PC-9 (cell line): ENCODE measurements at regions of chr12 and their contacts with region 1.

Region 1: DNA sequence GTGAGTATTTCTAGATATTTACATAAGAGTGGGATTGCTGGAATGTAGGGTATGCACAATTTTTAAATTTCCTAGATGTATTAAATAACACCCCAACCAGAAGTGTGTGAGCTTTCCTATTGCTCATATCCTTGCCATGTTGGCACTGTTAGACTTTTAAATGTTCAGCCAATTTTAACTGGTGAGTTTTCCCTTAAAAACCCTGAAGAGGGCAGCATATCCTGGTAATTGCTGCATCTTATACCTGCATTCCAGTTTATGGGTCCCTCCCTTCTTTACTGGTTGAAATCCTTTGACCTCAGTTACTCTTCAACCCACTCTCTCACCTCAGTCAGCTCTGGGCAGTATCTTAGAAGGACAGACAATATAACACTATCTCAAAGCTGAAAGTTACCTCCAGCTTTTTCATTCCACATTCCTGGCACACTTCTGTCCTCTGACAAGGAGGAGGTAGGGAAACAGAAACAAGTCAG is 270.6 kb downstream of the PAWR start:
- DNase-seq: peak; percentile 60 to 87
- H3K4me3 ChIP-seq: no peak overlapping the region
- H3K27ac ChIP-seq: peak overlapping the region; percentile 63
- H3K4me1 ChIP-seq: peaks cover 63% of the 10 kb centered on the region
- H3K27me3 ChIP-seq: no peaks in the 10 kb centered on the region
- CTCF ChIP-seq: peak; percentile 74

Region 2: DNA sequence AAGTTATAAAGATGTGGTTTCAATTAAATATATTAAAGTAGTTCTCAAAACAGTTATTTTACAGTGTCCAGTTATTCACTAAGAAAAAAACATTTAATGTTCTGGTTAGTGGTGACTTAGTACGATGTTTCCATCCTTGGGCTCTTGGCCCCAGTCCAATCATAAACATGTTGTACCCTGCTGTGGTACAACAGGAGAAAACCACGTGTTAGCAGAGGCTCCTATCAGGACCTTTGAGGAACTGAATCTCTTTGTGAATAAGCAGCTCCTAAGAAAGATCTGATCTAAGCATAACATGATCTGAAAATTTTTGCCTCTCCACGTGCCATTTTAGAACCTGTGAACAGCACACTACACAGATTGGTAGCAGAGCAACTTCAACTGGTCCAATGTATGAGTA is 321.7 kb before region 1 on chr12:
- CTCF ChIA-PET with region 1: no interaction called
- POLR2A ChIA-PET with region 1: no interaction called
- intact Hi-C with region 1: no loop called
- DNase-seq: no peak
- H3K4me3 ChIP-seq: no peak overlapping the region
- H3K27ac ChIP-seq: no peak overlapping the region
- H3K4me1 ChIP-seq: no peaks in the 10 kb centered on the region
- H3K27me3 ChIP-seq: no peaks in the 10 kb centered on the region
- CTCF ChIP-seq: no peak

Region 3: GRCh38 chr12:79388011-79388410 is 32.2 kb before region 1 on chr12:
- CTCF ChIA-PET with region 1: no interaction called
- POLR2A ChIA-PET with region 1: no interaction called
- intact Hi-C with region 1: no loop called
- DNase-seq: no peak
- H3K4me3 ChIP-seq: no peak overlapping the region
- H3K27ac ChIP-seq: no peak overlapping the region
- H3K4me1 ChIP-seq: no peaks in the 10 kb centered on the region
- H3K27me3 ChIP-seq: no peaks in the 10 kb centered on the region
- CTCF ChIP-seq: no peak

Region 4: DNA sequence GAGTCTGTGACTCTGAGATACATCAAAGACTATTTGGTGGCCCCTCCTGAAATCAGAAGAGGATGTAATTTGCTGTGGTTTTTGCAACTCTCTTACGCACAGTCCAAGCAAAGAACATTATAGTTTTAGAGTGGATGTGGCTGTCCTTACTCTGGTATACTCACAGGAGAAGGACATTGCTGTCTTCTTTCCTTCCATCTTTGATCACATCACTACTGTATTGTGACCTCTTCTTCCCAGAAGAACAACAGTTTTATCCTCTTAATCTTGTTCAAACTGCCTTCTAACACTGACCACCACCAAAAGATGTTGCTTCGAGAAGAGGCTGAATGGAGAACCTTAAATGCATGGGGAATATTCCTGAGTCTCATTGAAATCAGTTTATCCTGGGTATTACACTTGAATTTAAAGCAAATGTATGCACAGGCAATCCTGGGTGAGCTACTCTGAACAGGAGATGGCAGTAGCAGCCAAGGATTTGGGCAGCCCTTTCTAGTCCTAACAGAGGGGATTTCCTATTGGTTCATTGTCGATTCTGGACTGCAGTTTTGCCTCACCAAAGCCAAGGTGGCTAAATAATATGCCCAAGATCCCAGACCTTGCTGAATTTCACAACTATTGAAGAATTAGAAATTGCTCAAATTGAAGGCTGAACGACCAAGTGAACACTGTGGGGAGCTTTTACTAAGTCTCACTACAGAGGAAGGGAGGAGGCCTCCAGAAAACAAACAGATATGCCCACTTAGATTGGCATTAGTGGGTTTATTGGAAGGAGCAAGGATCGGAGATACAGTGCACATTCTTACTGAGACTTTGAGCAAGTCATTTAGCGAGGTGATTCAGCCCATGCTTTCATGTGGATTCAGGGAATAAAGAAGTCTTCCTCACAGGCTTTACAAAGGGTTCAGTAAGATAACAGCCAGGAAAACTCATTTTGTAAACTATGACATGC is 12.2 kb before region 1 on chr12:
- CTCF ChIA-PET with region 1: interaction called, 3 read pairs
- POLR2A ChIA-PET with region 1: no interaction called
- intact Hi-C with region 1: loop called (anchors 1 kb)
- DNase-seq: peak; percentile 67 to 70
- H3K4me3 ChIP-seq: no peak overlapping the region
- H3K27ac ChIP-seq: no peak overlapping the region
- H3K4me1 ChIP-seq: peaks cover 7% of the 10 kb centered on the region
- H3K27me3 ChIP-seq: no peaks in the 10 kb centered on the region
- CTCF ChIP-seq: peak; percentile 86

Region 5: GRCh38 chr12:79547735-79548609 is 127.8 kb after region 1 on chr12:
- CTCF ChIA-PET with region 1: interaction called, 16 read pairs
- POLR2A ChIA-PET with region 1: interaction called, 21 read pairs
- intact Hi-C with region 1: loop called (anchors 1 kb)
- DNase-seq: peak; percentile 70 to 90
- H3K4me3 ChIP-seq: peak overlapping the region; percentile 37; the same call in 1 of the 2 replicates
- H3K27ac ChIP-seq: peak overlapping the region; percentile 99
- H3K4me1 ChIP-seq: peaks cover 67% of the 10 kb centered on the region
- H3K27me3 ChIP-seq: no peaks in the 10 kb centered on the region
- CTCF ChIP-seq: peak; percentile 91

Region 6: GRCh38 chr12:79690638-79691493 is 270.7 kb after region 1 on chr12 and contains the start of gene PAWR:
- CTCF ChIA-PET with region 1: interaction called, 3 read pairs
- POLR2A ChIA-PET with region 1: interaction called, 8 read pairs
- intact Hi-C with region 1: loop called (anchors 1 kb)
- DNase-seq: peak; percentile 71 to 89
- H3K4me3 ChIP-seq: peak within 1 kb of the TSS; percentile 82
- H3K27ac ChIP-seq: peak within 1 kb of the TSS; percentile 99
- H3K4me1 ChIP-seq: peaks cover 38% of the 10 kb centered on the region
- H3K27me3 ChIP-seq: no peaks in the 10 kb centered on the region
- CTCF ChIP-seq: no peak; the same call in 1 of the 2 replicates
- total RNA-seq, gene PAWR: 204 and 361 TPM in 2 replicates

Region 7: DNA sequence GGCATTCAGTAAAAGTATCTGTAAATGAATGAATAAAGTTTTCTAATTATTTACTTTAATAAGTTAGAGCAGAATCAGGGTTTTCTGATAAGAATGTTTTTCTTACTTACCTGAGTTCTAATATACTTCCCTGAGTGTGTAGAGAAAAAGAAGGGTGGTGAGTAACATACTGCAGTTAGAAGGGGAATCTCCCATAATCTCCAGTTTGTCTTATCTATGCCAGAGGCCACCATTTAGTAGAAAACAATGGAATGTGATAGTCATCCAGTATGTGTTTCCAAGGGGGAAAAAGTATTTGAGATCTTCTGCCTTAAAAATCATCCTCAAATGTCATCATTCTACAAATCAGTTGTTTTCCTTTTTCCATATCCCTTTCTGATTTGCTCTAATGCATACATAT is 327.1 kb after region 1 on chr12:
- CTCF ChIA-PET with region 1: interaction called, 11 read pairs
- POLR2A ChIA-PET with region 1: no interaction called
- intact Hi-C with region 1: no loop called
- DNase-seq: no peak
- H3K4me3 ChIP-seq: no peak overlapping the region
- H3K27ac ChIP-seq: no peak overlapping the region
- H3K4me1 ChIP-seq: no peaks in the 10 kb centered on the region
- H3K27me3 ChIP-seq: no peaks in the 10 kb centered on the region
- CTCF ChIP-seq: no peak

Region 8: GRCh38 chr12:80186727-80187217 is 766.6 kb after region 1 on chr12:
- CTCF ChIA-PET with region 1: interaction called, 5 read pairs
- POLR2A ChIA-PET with region 1: no interaction called
- intact Hi-C with region 1: loop called (anchors 5 kb)
- DNase-seq: peak; percentile 28 to 64
- H3K4me3 ChIP-seq: no peak overlapping the region
- H3K27ac ChIP-seq: no peak overlapping the region
- H3K4me1 ChIP-seq: peaks cover 4% of the 10 kb centered on the region; the same call in 1 of the 2 replicates
- H3K27me3 ChIP-seq: no peaks in the 10 kb centered on the region
- CTCF ChIP-seq: peak; percentile 81